PC-9 (cell line): ENCODE measurements at regions of chr11 and their contacts with region 1.

Region 1: GRCh38 chr11:109939166-109939810 is 153.9 kb upstream of the ZC3H12C start:
- DNase-seq: peak; percentile 30 to 78
- H3K4me3 ChIP-seq: no peak overlapping the region
- H3K27ac ChIP-seq: no peak overlapping the region
- H3K4me1 ChIP-seq: peaks cover 11% of the 10 kb centered on the region; the same call in 1 of the 2 replicates
- H3K27me3 ChIP-seq: no peaks in the 10 kb centered on the region
- CTCF ChIP-seq: peak; percentile 88

Region 2: GRCh38 chr11:108697872-108698473 is 1241.3 kb before region 1 on chr11:
- CTCF ChIA-PET with region 1: no interaction called
- POLR2A ChIA-PET with region 1: no interaction called
- intact Hi-C with region 1: loop called (anchors 1 kb)
- DNase-seq: peak in 1 of 2 experiments; percentile 32
- H3K4me3 ChIP-seq: no peak overlapping the region
- H3K27ac ChIP-seq: no peak overlapping the region
- H3K4me1 ChIP-seq: no peaks in the 10 kb centered on the region
- H3K27me3 ChIP-seq: no peaks in the 10 kb centered on the region
- CTCF ChIP-seq: peak; percentile 93

Region 3: GRCh38 chr11:109707411-109707810 is 231.9 kb before region 1 on chr11:
- CTCF ChIA-PET with region 1: no interaction called
- POLR2A ChIA-PET with region 1: no interaction called
- intact Hi-C with region 1: loop called (anchors 10 kb)
- DNase-seq: no peak
- H3K4me3 ChIP-seq: no peak overlapping the region
- H3K27ac ChIP-seq: no peak overlapping the region
- H3K4me1 ChIP-seq: no peaks in the 10 kb centered on the region
- H3K27me3 ChIP-seq: no peaks in the 10 kb centered on the region
- CTCF ChIP-seq: no peak

Region 4: GRCh38 chr11:109853156-109853776 is 86.0 kb before region 1 on chr11:
- CTCF ChIA-PET with region 1: interaction called, 29 read pairs
- POLR2A ChIA-PET with region 1: no interaction called
- intact Hi-C with region 1: loop called (anchors 1 kb)
- DNase-seq: peak; percentile 21 to 66
- H3K4me3 ChIP-seq: no peak overlapping the region
- H3K27ac ChIP-seq: no peak overlapping the region
- H3K4me1 ChIP-seq: no peaks in the 10 kb centered on the region
- H3K27me3 ChIP-seq: no peaks in the 10 kb centered on the region
- CTCF ChIP-seq: peak; percentile 88

Region 5: DNA sequence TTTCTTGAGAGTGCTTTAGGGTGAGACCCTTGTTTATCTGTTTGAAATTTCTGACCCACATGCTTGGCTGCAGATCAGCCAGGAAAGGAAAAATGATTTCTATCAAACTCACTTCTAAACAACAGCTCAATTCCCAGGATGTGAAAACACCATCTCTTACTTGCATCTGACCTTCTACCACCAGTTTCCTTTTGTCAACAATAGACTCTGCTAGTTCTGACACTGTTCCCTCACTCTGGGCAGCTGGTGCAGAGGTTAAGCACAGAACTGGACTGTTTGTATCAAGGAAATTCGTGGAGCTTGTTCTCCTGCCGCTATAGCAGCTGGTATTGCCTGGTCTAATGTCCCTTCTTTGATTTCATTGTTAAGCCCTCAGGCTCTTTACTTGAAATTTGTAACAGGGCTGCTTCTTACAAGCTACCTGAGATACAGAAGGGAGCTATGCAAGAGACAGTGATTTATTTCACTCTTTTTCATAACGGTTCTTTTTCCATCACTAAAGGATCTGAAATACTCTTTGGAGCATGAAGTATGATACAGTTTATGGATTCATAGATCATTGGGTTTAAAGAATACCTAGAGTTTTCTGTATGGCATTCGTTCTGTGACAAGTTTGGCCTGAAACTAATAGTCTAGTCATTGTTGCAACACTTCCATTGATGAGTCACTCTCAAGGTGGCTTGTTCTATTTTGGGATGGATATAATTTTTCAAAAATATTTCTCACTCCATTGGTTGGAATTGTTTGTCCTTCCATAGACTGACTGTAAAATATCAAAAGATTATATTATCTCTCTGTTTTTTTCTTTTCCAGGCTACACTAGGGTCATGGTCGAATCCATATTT is 24.3 kb before region 1 on chr11:
- CTCF ChIA-PET with region 1: interaction called, 5 read pairs
- POLR2A ChIA-PET with region 1: no interaction called
- intact Hi-C with region 1: loop called (anchors 1 kb)
- DNase-seq: peak; percentile 29 to 68
- H3K4me3 ChIP-seq: peak overlapping the region; percentile 19; the same call in 1 of the 2 replicates
- H3K27ac ChIP-seq: peak overlapping the region; percentile 68
- H3K4me1 ChIP-seq: peaks cover 26% of the 10 kb centered on the region
- H3K27me3 ChIP-seq: no peaks in the 10 kb centered on the region
- CTCF ChIP-seq: no peak

Region 6: DNA sequence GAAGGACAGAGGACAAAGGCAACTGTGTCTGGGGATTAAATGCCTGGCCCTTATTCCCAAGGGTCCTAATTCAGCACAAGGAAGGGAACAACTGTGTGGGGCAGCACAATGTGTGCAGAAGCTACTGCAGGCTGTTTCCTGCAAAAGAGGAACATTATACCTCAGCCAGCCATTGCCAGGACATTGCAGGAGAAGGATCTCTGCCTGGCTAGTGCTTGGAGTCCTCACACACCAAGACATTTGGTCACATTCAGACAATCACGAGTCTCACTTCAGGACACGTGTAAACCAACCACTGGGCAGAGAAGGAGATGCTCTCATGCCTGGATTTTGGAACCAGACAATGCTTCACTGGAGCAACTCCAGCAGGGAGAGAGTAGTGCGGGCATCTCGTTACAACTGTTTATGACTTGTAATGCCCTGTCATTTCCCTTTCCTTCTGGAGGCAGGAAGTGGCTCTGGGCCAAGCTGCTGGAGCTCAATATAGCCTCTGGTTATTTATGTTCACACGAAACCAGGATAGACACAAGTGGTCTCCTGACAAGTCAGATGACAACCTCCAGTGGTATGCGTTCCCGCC is 130.0 kb after region 1 on chr11:
- CTCF ChIA-PET with region 1: no interaction called
- POLR2A ChIA-PET with region 1: interaction called, 17 read pairs
- intact Hi-C with region 1: no loop called
- DNase-seq: peak; percentile 50 to 89
- H3K4me3 ChIP-seq: no peak overlapping the region
- H3K27ac ChIP-seq: peak overlapping the region; percentile 57
- H3K4me1 ChIP-seq: peaks cover 37% of the 10 kb centered on the region
- H3K27me3 ChIP-seq: no peaks in the 10 kb centered on the region
- CTCF ChIP-seq: no peak